T-cell (primary cell): ENCODE measurements at regions of chr13 and their contacts with region 1.

Region 1: DNA sequence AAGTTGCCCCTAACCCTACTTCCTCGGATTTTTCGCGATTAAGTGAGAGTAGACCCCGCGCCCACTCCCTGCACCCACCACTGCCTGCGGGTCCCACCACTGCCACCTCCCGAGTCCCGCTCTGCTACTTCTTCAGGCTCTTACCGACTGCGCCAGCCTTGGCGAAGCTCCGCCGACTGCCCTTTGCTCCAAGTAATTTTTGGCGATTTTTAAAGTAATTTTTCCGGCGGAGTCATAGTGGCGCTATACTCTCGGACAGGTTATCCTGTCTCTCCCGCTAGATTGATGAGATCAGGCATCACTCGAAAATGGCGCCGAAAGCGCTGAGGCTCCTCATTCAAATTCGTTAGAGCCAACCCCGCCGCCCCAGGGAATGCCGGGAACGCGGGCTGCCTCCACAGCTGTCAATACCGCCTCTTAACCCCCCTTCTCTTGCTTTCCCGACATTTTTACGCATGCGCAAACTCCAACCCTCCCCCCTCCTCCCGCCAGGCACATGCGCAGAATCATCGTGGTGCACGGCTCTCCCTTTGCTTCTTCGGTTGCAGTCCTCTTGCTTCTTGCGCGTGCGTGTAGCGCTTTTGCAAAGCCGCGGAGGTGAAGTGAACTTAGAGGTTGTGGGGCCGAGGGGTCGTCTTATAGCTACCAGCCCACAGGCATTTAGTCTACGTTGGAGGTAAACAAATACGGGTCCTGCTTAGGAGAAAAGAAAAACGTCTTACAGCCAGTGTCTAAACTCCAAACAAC is 66.6 kb downstream of the KCNRG start:
- DNase-seq: peak; percentile 93 to 99 (median 97)
- ATAC-seq: peak; percentile 76 to 79 (median 77)
- H3K4me3 ChIP-seq: peak overlapping the region; percentile 87 to 96
- H3K4me3 Mint-ChIP-seq: peak overlapping the region; percentile 94 to 99 (median 96)
- H3K27ac ChIP-seq: peak overlapping the region; percentile 85
- H3K27ac Mint-ChIP-seq: peak overlapping the region; percentile 95 to 96
- H3K4me1 ChIP-seq: peaks cover 31 to 37% of the 10 kb centered on the region in 2 experiments
- H3K4me1 Mint-ChIP-seq: peaks cover 38 to 66% (median 61%) of the 10 kb centered on the region in 3 donors
- H3K27me3 ChIP-seq: peaks cover 0 to 10% of the 10 kb centered on the region in 2 experiments
- H3K27me3 Mint-ChIP-seq: peaks cover 0 to 9% of the 10 kb centered on the region in 2 donors

Region 2: DNA sequence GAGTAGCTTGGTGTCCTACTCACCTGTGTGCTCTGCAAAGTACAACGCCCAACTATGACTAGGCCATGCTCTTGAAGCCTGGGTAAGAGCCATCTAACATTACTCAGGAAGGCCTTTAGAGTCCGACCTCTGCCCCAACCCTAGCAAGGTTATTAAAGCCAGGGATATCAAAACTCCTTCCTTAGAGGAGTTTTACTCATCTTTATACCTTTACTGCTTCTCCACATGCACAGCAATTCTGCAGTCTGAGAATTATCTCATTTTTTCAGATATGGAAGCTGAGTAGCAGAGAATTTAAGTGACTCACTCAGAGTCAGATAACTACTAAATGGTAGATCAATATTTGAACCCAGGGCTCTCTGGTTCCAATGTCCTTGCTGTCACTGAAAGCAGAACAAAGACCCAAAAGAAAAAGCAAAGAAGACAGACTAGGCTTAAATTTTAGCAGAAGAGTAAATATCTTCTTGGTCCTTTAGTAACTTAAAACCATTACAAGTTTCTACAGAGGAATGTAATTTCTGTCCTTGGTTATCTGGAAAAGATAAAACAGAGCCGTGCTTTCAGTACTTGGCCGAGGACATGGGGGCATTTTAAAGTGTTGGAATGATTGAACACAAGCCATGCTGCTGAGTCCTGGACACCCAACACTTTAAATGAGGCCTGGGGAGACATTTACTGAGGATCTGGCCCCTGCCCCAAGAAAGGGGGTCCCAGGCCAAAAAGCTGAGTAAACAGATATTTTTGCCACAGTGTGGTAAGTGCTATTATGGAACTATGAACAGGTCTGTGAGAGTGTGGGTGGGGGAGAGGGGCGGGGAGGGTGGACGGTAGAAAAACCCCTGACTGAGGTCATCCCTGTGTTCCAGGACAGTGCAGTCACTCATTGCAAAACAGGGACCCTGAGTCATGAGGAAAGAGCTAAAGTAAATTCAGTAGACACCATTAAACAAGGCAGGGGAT is 271.0 kb before region 1 on chr13:
- CTCF ChIA-PET with region 1: no interaction called
- POLR2A ChIA-PET with region 1: no interaction called
- DNase-seq: no peak
- ATAC-seq: no peak
- H3K4me3 ChIP-seq: no peak overlapping the region
- H3K4me3 Mint-ChIP-seq: no peak overlapping the region
- H3K27ac ChIP-seq: no peak overlapping the region
- H3K27ac Mint-ChIP-seq: no peak overlapping the region
- H3K4me1 ChIP-seq: no peaks in the 10 kb centered on the region
- H3K4me1 Mint-ChIP-seq: no peaks in the 10 kb centered on the region
- H3K27me3 ChIP-seq: peaks cover 0 to 10% of the 10 kb centered on the region in 2 experiments
- H3K27me3 Mint-ChIP-seq: peaks cover 14 to 19% of the 10 kb centered on the region in 2 donors

Region 3: GRCh38 chr13:50810998-50811397 is 729.1 kb after region 1 on chr13:
- CTCF ChIA-PET with region 1: no interaction called
- POLR2A ChIA-PET with region 1: interaction called in 1 of 2 experiments, 11 read pairs
- DNase-seq: no peak
- ATAC-seq: no peak
- H3K4me3 ChIP-seq: no peak overlapping the region
- H3K4me3 Mint-ChIP-seq: no peak overlapping the region
- H3K27ac ChIP-seq: no peak overlapping the region
- H3K27ac Mint-ChIP-seq: no peak overlapping the region
- H3K4me1 ChIP-seq: no peaks in the 10 kb centered on the region
- H3K4me1 Mint-ChIP-seq: peaks cover 3 to 9% (median 6%) of the 10 kb centered on the region in 3 donors
- H3K27me3 ChIP-seq: no peaks in the 10 kb centered on the region
- H3K27me3 Mint-ChIP-seq: no peaks in the 10 kb centered on the region